Tibial artery (tissue), 4 donors: ENCODE measurements at regions of chr1 and their contacts with region 1.

Region 1: DNA sequence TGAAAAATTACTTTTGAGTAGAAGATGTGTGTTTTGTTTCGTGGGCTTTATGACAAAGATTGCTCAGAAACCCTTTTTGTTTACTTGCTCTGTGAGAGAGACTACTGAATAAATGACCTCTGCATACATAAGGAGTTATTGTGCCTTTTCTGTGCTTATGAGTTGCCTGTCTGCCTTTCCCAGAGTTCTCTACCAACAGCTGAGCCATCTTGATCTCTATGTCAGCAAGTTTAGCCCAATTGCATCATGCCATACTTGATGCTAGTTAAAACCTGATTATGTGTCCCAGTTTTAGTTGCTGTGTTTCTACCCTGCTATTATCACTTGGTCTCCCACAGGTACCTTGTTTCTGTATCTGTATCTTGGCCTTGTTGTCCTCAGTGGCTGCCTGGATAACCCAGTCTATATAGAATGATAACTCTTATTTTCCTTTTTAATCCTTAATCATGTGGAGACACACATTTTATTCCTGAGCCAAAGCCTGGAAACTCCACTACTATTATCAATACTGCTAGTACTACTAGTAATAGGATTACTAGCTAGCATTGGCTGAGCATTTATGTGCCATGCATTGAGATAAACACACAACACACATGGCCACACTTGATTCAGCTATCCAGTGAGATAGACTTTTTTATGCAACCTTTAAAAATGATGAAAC is 28.7 kb upstream of the GNG12 start:
- DNase-seq: no peak
- H3K4me3 ChIP-seq: no peak overlapping the region
- H3K27ac ChIP-seq: no peak overlapping the region
- H3K4me1 ChIP-seq: no peaks in the 10 kb centered on the region
- H3K27me3 ChIP-seq: no peaks in the 10 kb centered on the region
- CTCF ChIP-seq: no peak

Region 2: DNA sequence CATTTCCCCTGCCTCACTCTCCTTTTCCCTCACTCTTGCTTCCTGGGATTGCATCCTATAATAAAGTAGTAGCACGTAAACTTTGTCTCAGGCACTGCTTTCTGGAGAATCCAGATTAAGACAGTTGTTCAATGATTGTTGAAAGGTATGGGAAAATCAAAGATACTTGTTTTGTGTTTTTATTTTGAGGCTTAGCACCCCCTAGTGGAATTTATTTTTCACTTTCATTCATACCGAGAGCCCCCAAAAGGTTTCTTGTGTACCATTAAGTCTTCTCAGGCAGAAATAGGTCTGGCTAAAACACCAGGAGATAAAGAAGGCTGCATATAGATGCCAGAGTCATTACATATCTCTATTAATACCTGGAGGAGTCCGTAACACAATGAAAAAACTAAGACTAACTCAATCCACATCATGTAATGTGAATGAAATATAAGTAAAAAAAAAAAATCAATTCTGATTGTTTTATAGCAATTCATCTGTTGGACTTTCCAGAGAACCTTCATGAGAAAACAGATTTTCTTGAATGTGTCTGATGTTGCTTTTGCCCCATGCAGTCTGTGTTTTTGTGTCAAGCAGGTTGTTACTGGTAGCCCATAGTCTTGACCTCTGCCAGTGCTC is 484.3 kb after region 1 on chr1:
- intact Hi-C with region 1: loop called (anchors 10 kb)
- DNase-seq: no peak
- H3K4me3 ChIP-seq: no peak overlapping the region
- H3K27ac ChIP-seq: no peak overlapping the region
- H3K4me1 ChIP-seq: peaks cover 0 to 5% (median 2%) of the 10 kb centered on the region in 4 donors
- H3K27me3 ChIP-seq: no peaks in the 10 kb centered on the region
- CTCF ChIP-seq: peak; percentile 30 to 39